CD14-positive monocyte (primary cell): ENCODE measurements at regions of chr10 and their contacts with region 1.

Region 1: DNA sequence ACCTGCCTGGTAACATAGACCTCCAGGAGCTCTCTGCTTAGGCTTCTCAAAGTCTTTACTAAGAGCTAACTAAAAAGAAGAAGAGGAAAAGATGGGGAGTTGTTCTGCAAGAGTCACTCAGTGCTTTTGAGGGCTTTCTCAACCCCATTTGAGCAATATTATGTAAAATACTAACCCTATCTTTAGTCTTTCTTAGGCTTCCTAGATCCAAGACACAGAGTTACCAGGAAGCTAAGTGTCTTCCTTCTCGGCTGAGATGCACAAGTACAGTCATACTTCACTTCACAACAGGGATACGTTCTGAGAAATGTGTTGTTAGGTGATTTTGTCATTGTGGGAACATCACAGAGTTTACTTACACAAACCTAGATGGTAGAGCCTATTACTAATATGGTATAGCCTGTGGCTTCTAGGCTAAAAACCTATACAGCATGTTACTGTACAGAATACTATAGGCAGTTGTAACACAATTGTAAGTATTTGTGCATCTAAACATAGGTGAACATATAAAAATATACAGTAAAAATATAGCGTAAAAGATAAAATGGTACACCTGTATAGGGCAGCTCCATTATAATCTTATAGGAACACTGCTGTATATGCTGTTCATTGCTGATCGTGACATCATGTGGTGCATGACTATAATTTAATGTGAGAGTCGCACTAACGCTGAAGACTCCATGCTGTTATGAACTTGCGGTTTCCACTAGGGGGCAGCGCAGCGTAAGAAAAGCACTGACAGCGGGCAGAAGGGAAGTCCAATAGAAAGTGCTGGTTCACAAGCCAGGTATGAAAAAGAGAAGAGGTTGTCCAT is 16.3 kb downstream of the ANKRD22 start:
- DNase-seq: peak; percentile 81 to 89 (median 82)
- H3K4me3 ChIP-seq: peak overlapping the region in 1 of 3 experiments; percentile 43
- H3K4me3 Mint-ChIP-seq: peak overlapping the region in 1 of 2 donors; percentile 52
- H3K27ac ChIP-seq: peak overlapping the region; percentile 61 to 80
- H3K27ac Mint-ChIP-seq: no peak overlapping the region
- H3K4me1 ChIP-seq: peaks cover 35 to 38% of the 10 kb centered on the region in 2 donors
- H3K4me1 Mint-ChIP-seq: peaks cover 21% of the 10 kb centered on the region
- H3K27me3 ChIP-seq: no peaks in the 10 kb centered on the region
- H3K27me3 Mint-ChIP-seq: peaks cover 0 to 2% (median 0%) of the 10 kb centered on the region in 3 donors
- CTCF ChIP-seq: peak; percentile 97

Region 2: DNA sequence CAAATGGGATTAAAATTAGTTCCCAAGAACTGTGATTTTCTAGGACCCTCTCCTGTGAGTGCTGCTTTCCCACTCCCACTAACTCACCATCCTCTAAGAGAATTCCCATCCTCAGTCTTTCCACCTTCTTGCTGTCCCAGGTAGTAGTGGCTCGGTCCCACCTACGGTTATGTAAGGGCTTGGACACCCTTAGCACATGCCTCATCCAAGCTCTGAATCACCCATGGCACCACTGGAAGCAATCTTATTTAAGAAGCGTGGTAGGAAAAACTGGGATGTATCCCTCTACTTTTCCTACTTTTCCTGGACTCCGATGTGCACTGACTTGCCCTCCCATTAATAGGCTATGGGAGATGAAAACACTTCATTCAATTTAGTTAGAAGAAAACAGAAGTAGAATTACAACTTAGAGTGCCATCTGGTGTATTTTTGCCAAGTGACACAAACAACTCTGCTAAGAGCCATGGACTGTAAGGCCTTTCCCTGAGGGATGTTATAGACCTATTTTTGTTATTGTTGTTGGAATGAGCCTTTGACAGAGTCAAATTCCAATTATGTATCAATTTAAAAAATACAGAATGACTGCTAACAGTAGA is 30.1 kb after region 1 on chr10:
- intact Hi-C with region 1: loop called in 1 of 2 experiments (anchors 2 kb)
- DNase-seq: peak; percentile 39 to 71 (median 55)
- H3K4me3 ChIP-seq: no peak overlapping the region
- H3K4me3 Mint-ChIP-seq: no peak overlapping the region
- H3K27ac ChIP-seq: no peak overlapping the region
- H3K27ac Mint-ChIP-seq: peak overlapping the region in 1 of 7 donors; percentile 40
- H3K4me1 ChIP-seq: peaks cover 14 to 20% of the 10 kb centered on the region in 2 donors
- H3K4me1 Mint-ChIP-seq: peaks cover 19% of the 10 kb centered on the region
- H3K27me3 ChIP-seq: no peaks in the 10 kb centered on the region
- H3K27me3 Mint-ChIP-seq: peaks cover 0 to 1% (median 0%) of the 10 kb centered on the region in 3 donors
- CTCF ChIP-seq: peak; percentile 66

Region 3: GRCh38 chr10:88880282-88881076 is 45.2 kb after region 1 on chr10:
- intact Hi-C with region 1: loop called in 1 of 2 experiments (anchors 5 kb)
- DNase-seq: peak; percentile 80 to 83 (median 81)
- H3K4me3 ChIP-seq: peak overlapping the region; percentile 52 to 88 (median 86)
- H3K4me3 Mint-ChIP-seq: peak overlapping the region; percentile 94 to 96
- H3K27ac ChIP-seq: peak overlapping the region; percentile 91 to 92
- H3K27ac Mint-ChIP-seq: peak overlapping the region; percentile 91 to 95 (median 93)
- H3K4me1 ChIP-seq: peaks cover 18 to 21% of the 10 kb centered on the region in 2 donors
- H3K4me1 Mint-ChIP-seq: peaks cover 26% of the 10 kb centered on the region
- H3K27me3 ChIP-seq: no peaks in the 10 kb centered on the region
- H3K27me3 Mint-ChIP-seq: no peaks in the 10 kb centered on the region
- CTCF ChIP-seq: no peak

Region 4: DNA sequence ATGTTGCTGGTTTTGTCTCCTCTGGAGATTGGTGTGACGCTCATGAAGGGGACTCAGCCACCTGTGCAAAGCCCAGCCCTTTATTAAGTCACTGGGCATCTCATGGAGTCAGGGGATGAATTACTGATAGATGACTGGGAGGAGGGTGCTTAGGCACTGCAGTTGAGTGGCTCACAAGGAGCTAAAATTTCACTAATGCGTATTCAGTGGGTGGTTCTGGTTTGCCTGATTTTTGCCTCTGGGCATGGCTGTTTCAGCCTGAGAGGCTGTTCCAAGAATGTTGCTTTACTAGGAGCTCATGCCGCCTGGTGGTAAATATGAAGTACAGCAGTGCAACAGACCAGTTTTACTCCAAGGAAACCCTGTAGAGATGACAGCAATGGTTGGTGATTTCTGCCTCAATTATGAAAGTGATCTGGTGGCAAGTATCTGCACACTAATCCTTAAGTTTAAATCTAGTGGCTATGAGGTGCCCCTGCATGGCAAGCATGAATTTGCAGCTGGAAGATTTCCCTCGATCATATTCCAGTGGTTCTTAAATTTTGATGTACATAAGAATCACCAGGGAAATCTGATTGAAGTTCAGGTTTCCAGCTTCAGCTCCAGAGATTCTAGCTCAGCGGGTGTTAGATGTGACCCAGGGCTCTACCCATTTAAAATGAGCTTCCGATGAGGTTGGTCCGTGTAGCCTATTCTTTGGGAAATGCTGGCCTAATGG is 97.4 kb after region 1 on chr10:
- intact Hi-C with region 1: loop called (anchors 2 to 5 kb)
- DNase-seq: peak; percentile 38 to 64 (median 63)
- H3K4me3 ChIP-seq: no peak overlapping the region
- H3K4me3 Mint-ChIP-seq: peak overlapping the region in 1 of 2 donors; percentile 28
- H3K27ac ChIP-seq: no peak overlapping the region
- H3K27ac Mint-ChIP-seq: peak overlapping the region in 1 of 7 donors; percentile 18
- H3K4me1 ChIP-seq: peaks cover 9% of the 10 kb centered on the region in 2 donors
- H3K4me1 Mint-ChIP-seq: peaks cover 11% of the 10 kb centered on the region
- H3K27me3 ChIP-seq: no peaks in the 10 kb centered on the region
- H3K27me3 Mint-ChIP-seq: peaks cover 0 to 3% (median 0%) of the 10 kb centered on the region in 3 donors
- CTCF ChIP-seq: peak; percentile 77

Region 5: DNA sequence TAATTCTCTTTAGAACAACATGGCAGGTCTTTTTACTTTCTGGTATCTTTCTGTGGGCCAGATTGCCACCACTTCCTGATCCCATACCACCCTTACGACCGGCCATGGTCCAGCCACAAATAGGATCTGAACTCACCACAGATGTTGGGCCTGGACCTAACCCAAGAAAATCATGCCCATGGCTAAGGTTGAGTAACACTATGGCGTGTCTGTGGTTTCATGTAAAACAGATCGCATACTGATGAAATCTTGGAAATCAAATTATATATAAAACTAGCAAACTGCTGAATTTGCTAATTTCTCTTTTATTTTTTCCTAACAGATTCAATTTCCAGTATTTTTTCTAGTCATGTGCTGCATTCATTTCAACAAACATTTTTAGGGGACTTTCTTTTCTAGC is 294.6 kb after region 1 on chr10:
- intact Hi-C with region 1: no loop called
- DNase-seq: peak; percentile 71 to 88 (median 76)
- H3K4me3 ChIP-seq: peak overlapping the region in 1 of 3 experiments; percentile 4
- H3K4me3 Mint-ChIP-seq: peak overlapping the region in 1 of 2 donors; percentile 42
- H3K27ac ChIP-seq: peak overlapping the region in 1 of 2 donors; percentile 51
- H3K27ac Mint-ChIP-seq: peak overlapping the region in 6 of 7 donors; percentile 48 to 73 (median 63)
- H3K4me1 ChIP-seq: peaks cover 7 to 13% of the 10 kb centered on the region in 2 donors
- H3K4me1 Mint-ChIP-seq: peaks cover 15% of the 10 kb centered on the region
- H3K27me3 ChIP-seq: peaks cover 0 to 27% of the 10 kb centered on the region in 2 donors
- H3K27me3 Mint-ChIP-seq: peaks cover 6 to 17% (median 8%) of the 10 kb centered on the region in 3 donors
- CTCF ChIP-seq: no peak